ENCODE measurements at regions of chr6 and their contacts with region 1.

Region 1: DNA sequence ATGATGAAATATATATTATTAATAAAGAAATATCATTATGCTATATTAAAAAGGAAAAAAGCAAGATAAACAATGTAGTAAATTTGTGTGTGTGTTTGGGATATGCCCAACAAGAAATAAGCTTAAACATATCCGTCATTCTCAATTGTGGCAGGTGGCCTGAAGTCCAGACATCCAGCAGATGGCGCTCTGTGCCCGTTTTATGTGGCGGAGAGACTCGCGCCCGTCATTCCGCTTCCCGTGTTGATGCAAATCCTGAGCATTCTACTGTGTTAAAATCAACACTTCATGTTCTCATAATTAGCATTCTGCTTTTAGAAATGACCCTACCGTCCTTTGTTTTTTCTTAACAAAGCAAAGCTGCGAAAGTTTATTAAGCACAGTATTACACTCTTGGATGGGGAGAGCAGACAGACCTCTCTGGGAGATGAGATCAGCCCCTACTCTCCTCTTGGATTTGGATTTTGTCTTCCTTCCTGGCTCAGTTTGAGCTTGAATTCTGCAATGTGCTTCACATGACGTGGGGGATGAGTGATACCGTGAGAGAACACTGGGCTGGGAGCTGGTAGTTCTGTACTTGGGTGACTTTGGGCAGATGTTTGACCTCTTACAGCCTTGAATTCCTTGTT is 125.8 kb downstream of the MCHR2 start:
- DNase-seq: peak; percentile 67
- H3K4me3 ChIP-seq: no peak overlapping the region
- H3K27ac ChIP-seq: no peak overlapping the region
- H3K4me1 ChIP-seq: no peaks in the 10 kb centered on the region
- H3K27me3 ChIP-seq: peaks cover 1 to 14% of the 10 kb centered on the region in 2 experiments
- CTCF ChIP-seq: peak; percentile 77 to 91
- POLR2A ChIP-seq: no peak

Region 2: GRCh38 chr6:99882128-99882702 is 14.0 kb after region 1 on chr6:
- CTCF ChIA-PET with region 1: interaction called, 38 read pairs
- POLR2A ChIA-PET with region 1: no interaction called
- dilution Hi-C with region 1: no loop called
- intact Hi-C with region 1: no loop called
- DNase-seq: no peak
- H3K4me3 ChIP-seq: no peak overlapping the region
- H3K27ac ChIP-seq: no peak overlapping the region
- H3K4me1 ChIP-seq: no peaks in the 10 kb centered on the region
- H3K27me3 ChIP-seq: no peaks in the 10 kb centered on the region
- CTCF ChIP-seq: no peak
- POLR2A ChIP-seq: no peak

Region 3: GRCh38 chr6:99905209-99906106 is 37.3 kb after region 1 on chr6:
- CTCF ChIA-PET with region 1: interaction called, 67 read pairs
- POLR2A ChIA-PET with region 1: no interaction called
- dilution Hi-C with region 1: no loop called
- intact Hi-C with region 1: loop called (anchors 1 kb)
- DNase-seq: peak; percentile 47
- H3K4me3 ChIP-seq: no peak overlapping the region
- H3K27ac ChIP-seq: no peak overlapping the region
- H3K4me1 ChIP-seq: no peaks in the 10 kb centered on the region
- H3K27me3 ChIP-seq: no peaks in the 10 kb centered on the region
- CTCF ChIP-seq: peak; percentile 32 to 61
- POLR2A ChIP-seq: no peak

Region 4: GRCh38 chr6:100099189-100100074 is 231.2 kb after region 1 on chr6:
- CTCF ChIA-PET with region 1: interaction called, 172 read pairs
- POLR2A ChIA-PET with region 1: no interaction called
- dilution Hi-C with region 1: no loop called
- intact Hi-C with region 1: loop called (anchors 1 kb)
- DNase-seq: peak; percentile 44
- H3K4me3 ChIP-seq: no peak overlapping the region
- H3K27ac ChIP-seq: no peak overlapping the region
- H3K4me1 ChIP-seq: no peaks in the 10 kb centered on the region
- H3K27me3 ChIP-seq: peaks cover 8 to 34% of the 10 kb centered on the region in 2 experiments
- CTCF ChIP-seq: peak; percentile 26 to 27
- POLR2A ChIP-seq: no peak

Region 5: GRCh38 chr6:100479179-100480035 is 611.2 kb after region 1 on chr6:
- CTCF ChIA-PET with region 1: interaction called, 3 read pairs
- POLR2A ChIA-PET with region 1: no interaction called
- dilution Hi-C with region 1: no loop called
- intact Hi-C with region 1: loop called (anchors 1 kb)
- DNase-seq: peak; percentile 68
- H3K4me3 ChIP-seq: no peak overlapping the region
- H3K27ac ChIP-seq: no peak overlapping the region
- H3K4me1 ChIP-seq: no peaks in the 10 kb centered on the region
- H3K27me3 ChIP-seq: peaks cover 0 to 5% of the 10 kb centered on the region in 2 experiments
- CTCF ChIP-seq: peak; percentile 40 to 55
- POLR2A ChIP-seq: no peak

Region 6: DNA sequence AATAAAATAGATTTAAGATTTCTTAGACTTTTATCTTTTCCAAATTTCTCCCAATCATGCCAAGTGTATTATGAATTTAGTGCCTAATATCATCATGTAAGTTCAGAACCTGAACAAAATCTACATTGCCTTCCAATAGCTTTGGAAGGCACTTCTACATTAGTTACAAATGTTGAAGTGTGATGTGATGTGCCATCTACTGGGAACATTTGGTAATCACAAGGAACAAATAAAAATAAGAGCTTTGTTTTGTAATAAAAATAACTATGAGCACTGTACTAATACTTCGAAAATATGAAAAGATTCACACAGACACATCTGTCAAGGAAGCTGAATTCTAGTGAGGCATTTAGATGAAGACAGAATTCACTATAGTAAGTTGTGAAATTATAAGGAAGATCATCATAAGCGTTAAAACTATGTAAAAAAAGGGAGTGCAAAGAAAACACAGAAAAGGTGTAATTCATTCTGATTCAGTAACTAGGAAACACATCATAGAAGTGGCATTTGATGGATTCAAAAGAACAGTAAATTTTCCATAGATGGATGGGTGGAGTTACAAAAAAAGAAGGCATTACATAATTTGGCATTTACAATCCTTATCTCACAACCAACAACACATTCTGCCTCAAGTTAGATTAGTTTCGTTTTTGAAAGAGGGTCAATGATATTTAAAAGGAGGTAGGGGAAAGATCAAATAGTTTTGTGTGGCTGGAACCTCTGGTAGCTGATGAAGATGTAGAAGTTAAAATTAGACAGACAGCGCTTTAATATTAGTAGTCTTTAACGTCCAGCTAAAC is 851.9 kb after region 1 on chr6:
- CTCF ChIA-PET with region 1: interaction called, 20 read pairs
- POLR2A ChIA-PET with region 1: no interaction called
- dilution Hi-C with region 1: no loop called
- intact Hi-C with region 1: loop called (anchors 5 kb)
- DNase-seq: peak; percentile 76
- H3K4me3 ChIP-seq: peak overlapping the region; percentile 16 to 83 (median 53)
- H3K27ac ChIP-seq: peak overlapping the region; percentile 48
- H3K4me1 ChIP-seq: peaks cover 4% of the 10 kb centered on the region
- H3K27me3 ChIP-seq: no peaks in the 10 kb centered on the region
- CTCF ChIP-seq: peak; percentile 18 to 22
- POLR2A ChIP-seq: no peak